ENCODE measurements at regions of chr19 and their contacts with region 1.

Region 1: GRCh38 chr19:3505598-3506383 is at the start of gene FZR1:
- DNase-seq: peak; percentile 100
- H3K4me3 Mint-ChIP-seq: peak within 1 kb of the TSS; percentile 93
- H3K27ac Mint-ChIP-seq: peak within 1 kb of the TSS; percentile 97
- H3K4me1 Mint-ChIP-seq: peaks cover 43% of the 10 kb centered on the region
- H3K27me3 Mint-ChIP-seq: no peaks in the 10 kb centered on the region
- total RNA-seq, gene FZR1: 41.1 and 45.3 TPM in 2 replicates

Region 2: GRCh38 chr19:2168619-2169424 is 1337.0 kb before region 1 on chr19:
- intact Hi-C with region 1: loop called (anchors 5 kb)
- DNase-seq: peak; percentile 37
- H3K4me3 Mint-ChIP-seq: peak overlapping the region; percentile 81
- H3K27ac Mint-ChIP-seq: peak overlapping the region; percentile 87
- H3K4me1 Mint-ChIP-seq: peaks cover 53% of the 10 kb centered on the region
- H3K27me3 Mint-ChIP-seq: peaks cover 1% of the 10 kb centered on the region

Region 3: GRCh38 chr19:3557461-3558248 is 51.9 kb after region 1 on chr19 and contains the start of gene MFSD12:
- intact Hi-C with region 1: loop called (anchors 1 kb)
- DNase-seq: peak; percentile 96
- H3K4me3 Mint-ChIP-seq: peak within 1 kb of the TSS; percentile 96
- H3K27ac Mint-ChIP-seq: peak within 1 kb of the TSS; percentile 84
- H3K4me1 Mint-ChIP-seq: peaks cover 32% of the 10 kb centered on the region
- H3K27me3 Mint-ChIP-seq: no peaks in the 10 kb centered on the region
- total RNA-seq, gene MFSD12: 126 and 136 TPM in 2 replicates

Region 4: DNA sequence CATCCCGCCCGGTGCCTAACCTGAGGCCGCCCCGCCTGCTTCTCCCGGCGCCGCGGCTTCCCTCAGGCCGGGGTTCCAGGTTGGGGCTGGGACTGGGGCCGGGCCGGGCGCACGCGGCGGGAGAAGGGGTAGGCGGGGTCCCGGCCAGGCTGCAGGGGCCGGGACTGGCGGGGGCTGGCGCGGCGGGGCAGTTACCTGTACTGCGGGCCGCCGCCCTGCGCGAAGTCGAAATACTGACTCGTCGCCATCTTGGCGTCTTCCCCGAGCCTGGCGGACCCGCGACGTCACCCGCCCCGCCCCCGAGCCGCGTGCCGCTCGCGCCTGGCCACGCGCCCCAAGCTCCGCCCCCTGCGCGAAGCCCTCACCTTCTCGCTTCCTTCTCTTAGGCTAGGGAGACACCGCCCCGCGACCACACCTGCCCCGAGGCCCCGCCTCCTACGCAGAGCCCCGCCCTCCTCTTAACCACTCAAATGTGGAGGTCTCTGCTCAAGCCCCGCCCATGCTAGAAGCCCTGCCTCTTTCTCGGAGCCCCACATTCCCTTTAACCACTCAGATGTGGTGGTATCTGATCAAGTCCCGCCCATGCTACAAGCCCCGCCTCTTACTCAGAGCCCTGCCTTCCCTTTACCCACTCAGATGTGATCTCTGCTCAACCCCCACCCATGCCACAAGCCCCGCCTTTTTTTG is 363.1 kb after region 1 on chr19 and contains the start of gene ZFR2:
- intact Hi-C with region 1: no loop called
- DNase-seq: no peak
- H3K4me3 Mint-ChIP-seq: no peak within 1 kb of the TSS
- H3K27ac Mint-ChIP-seq: no peak within 1 kb of the TSS
- H3K4me1 Mint-ChIP-seq: no peaks in the 10 kb centered on the region
- H3K27me3 Mint-ChIP-seq: peaks cover 32% of the 10 kb centered on the region
- total RNA-seq, gene ZFR2: 0.39 TPM in 1 of 2 replicates, not detected in the other

Region 5: DNA sequence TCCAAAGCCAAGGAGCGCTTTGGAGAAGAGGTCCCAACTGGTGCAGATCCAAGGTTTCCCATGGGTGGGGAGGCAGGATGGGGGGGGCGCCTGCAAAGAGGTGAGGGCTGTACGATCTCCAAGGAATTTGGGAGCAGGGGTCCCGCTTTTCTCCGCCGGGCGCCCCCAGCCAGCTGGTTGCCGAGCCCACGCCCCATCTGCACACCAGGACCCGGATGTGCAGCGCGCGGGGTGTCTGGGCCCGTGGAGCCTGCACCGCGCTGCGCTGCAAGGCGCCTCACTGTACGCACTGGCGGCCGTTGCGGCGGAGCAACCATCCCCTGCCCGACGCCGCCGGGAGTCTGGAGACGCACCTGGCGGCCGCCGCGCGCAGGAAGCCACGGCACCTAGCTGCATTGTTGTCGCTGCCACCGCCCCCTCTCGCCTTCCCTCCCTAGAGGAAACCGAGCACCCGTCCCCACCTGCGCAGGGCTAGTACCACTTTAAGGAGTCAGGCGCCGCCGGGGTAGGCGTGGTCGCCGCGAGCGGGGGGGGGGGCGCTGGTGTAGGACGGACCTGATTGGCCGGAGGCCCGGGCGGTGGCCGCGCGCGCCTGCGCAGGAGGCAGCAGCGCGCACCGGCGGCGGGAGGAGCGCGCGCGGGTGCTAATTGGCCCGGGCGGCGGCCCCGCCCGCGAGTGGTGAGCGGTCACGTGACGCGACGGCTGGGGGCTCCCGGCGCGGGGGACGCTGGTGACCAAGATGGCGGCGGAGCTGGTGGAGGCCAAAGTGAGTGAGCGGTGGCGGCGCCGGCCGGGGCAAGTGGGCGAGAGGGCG is 501.4 kb after region 1 on chr19 and contains the start of gene PIAS4:
- intact Hi-C with region 1: loop called (anchors 1 kb)
- DNase-seq: peak; percentile 94
- H3K4me3 Mint-ChIP-seq: peak within 1 kb of the TSS; percentile 90
- H3K27ac Mint-ChIP-seq: peak within 1 kb of the TSS; percentile 84
- H3K4me1 Mint-ChIP-seq: peaks cover 18% of the 10 kb centered on the region
- H3K27me3 Mint-ChIP-seq: no peaks in the 10 kb centered on the region
- total RNA-seq, gene PIAS4: 37.6 and 41.0 TPM in 2 replicates

Measured in activated T-helper 1 cell treated with anti-CD3 and anti-CD28 coated beads, Interleukin-12 subunit alpha, Interleukin-12 subunit beta, Interleukin-2, Interleukin-4 antibody, amounts not matched to agents 30 ng/mL and 10 ng/mL and 1 ng/mL, durations not matched to agents 14 hours and 24 hours and 36 hours (primary cell).